ENCODE measurements at regions of chr4 and their contacts with region 1.

Region 1: GRCh38 chr4:3037957-3038461 is 36.3 kb downstream of the HTT-AS start:
- DNase-seq: peak; percentile 65 to 82
- ATAC-seq: peak in 7 of 8 donors; percentile 16 to 70 (median 66)
- H3K4me3 ChIP-seq: peak overlapping the region in 9 of 10 donors; percentile 5 to 46 (median 30)
- H3K27ac ChIP-seq: peak overlapping the region in 8 of 10 donors; percentile 5 to 75 (median 46)
- H3K4me1 ChIP-seq: peaks cover 0 to 42% (median 34%) of the 10 kb centered on the region in 9 donors
- H3K27me3 ChIP-seq: no peaks in the 10 kb centered on the region
- CTCF ChIP-seq: no peak

Region 2: DNA sequence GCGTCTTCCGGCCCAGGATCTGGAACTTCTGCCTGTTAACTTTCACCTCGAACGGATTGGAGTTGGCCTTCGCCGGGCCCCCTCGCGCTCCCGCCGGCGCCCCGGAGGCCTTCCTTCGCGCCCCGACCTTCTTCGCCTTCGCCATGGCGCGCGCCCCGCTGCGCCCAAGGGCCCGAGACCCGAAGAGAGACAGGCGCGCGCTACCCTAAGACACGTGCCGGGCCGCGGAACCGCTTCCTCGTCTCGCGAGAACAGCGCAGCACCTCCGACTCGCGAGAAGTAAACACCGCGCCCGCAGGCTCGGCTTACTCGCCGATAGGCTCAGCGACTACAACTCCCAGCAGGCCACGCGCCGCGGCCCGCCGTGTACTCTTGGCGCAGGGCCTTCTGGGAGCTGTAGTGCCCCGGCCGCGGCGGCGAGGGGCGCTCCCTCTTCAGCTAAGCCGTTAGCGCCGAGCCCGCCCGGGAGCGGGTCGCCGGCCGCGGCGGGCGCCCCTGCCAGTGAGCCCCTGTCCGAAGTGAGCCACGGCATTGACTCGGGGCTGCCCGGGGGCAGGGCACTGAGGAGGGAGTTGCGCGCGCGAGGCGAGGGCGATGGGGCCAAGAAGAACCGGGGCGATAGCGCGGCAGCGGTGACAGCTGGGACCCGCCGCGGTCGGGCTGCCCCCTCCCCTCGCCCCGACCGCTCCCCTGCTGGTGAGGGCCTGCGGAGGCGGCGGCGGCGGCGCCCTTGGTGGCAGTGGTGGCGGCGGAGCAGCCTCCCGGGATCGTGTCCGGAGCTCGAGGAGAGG is 74.6 kb before region 1 on chr4 and contains the starts of genes GRK4 and NOP14:
- intact Hi-C with region 1: loop called in 2 of 10 experiments (anchors 5 to 10 kb)
- DNase-seq: peak; percentile 97 to 98
- ATAC-seq: peak; percentile 97 to 99 (median 98)
- H3K4me3 ChIP-seq: peak within 1 kb of the TSS; percentile 77 to 99 (median 97)
- H3K27ac ChIP-seq: peak within 1 kb of the TSS; percentile 86 to 95 (median 92)
- H3K4me1 ChIP-seq: peaks cover 9 to 36% (median 25%) of the 10 kb centered on the region in 9 donors
- H3K27me3 ChIP-seq: no peaks in the 10 kb centered on the region
- CTCF ChIP-seq: peak in 8 of 9 donors; percentile 21 to 64 (median 41)
- total RNA-seq, gene GRK4: 6.2 to 13.4 (median 10.3) TPM
- total RNA-seq, gene NOP14: 12.4 to 24.0 (median 17.3) TPM

Region 3: DNA sequence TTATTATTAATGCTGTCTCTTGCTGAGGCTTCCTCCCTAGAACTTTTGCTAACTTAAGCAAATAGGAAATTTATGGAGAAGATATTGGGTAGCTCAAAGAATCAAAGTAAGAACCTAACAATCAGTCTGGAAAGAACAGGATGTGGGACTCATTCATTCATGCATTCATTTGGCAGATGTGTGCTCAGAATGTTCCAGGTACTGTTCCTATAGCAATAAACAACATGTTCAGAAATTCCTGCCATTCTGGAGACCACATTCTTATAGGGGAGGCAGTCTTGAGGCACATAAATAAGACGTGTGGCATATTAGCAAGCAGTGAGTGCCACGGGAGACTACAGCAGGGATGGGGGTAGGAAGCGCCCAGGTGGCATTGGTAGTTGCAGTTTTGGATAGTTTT is 69.6 kb before region 1 on chr4:
- intact Hi-C with region 1: loop called in 2 of 10 experiments (anchors 5 to 10 kb)
- DNase-seq: no peak
- ATAC-seq: no peak
- H3K4me3 ChIP-seq: no peak overlapping the region
- H3K27ac ChIP-seq: no peak overlapping the region
- H3K4me1 ChIP-seq: peaks cover 0 to 13% (median 9%) of the 10 kb centered on the region in 9 donors
- H3K27me3 ChIP-seq: no peaks in the 10 kb centered on the region
- CTCF ChIP-seq: no peak

Measured in heart right ventricle (tissue), 16 donors.